Right ventricle myocardium inferior (tissue), 1 donor: ENCODE measurements at regions of chr7 and their contacts with region 1.

Region 1: GRCh38 chr7:132333301-132333700 is 243.0 kb downstream of the PLXNA4 start:
- DNase-seq: no peak
- ATAC-seq: peak; percentile 30

Region 2: GRCh38 chr7:132171130-132171576 is 162.1 kb before region 1 on chr7:
- intact Hi-C with region 1: no loop called
- DNase-seq: no peak
- ATAC-seq: peak; percentile 37

Region 3: GRCh38 chr7:132377015-132377414 is 43.7 kb after region 1 on chr7:
- intact Hi-C with region 1: loop called (anchors 5 kb)
- DNase-seq: no peak
- ATAC-seq: no peak

Region 4: GRCh38 chr7:132402751-132403245 is 69.5 kb after region 1 on chr7:
- intact Hi-C with region 1: loop called (anchors 5 kb)
- DNase-seq: no peak
- ATAC-seq: peak; percentile 56

Region 5: DNA sequence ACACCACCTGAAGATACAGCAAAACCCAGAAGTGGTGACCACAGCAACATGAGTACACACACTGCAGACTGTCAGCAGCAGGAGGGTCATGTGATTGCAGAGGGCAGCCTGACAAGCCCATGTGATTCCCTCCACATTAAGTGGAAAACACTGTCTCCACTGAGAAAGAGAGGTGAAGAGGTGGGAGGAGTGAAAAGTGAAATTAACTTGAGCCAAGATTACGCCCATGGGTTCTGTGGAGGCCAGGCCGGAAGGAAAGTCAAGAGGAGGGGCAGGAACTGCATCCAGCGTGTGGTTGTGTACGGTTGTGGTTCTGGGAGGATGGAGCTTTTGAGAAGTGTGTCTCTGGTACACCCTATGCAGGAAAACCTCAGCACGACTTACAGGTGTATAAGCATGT is 104.4 kb after region 1 on chr7:
- intact Hi-C with region 1: loop called (anchors 5 kb)
- DNase-seq: no peak
- ATAC-seq: peak; percentile 47